AG04449 (cell line): ENCODE measurements at regions of chr2 and their contacts with region 1.

Region 1: GRCh38 chr2:98839292-98839691 is 96.7 kb downstream of the CRACDL start:
- DNase-seq: peak; percentile 26
- H3K4me3 ChIP-seq: no peak overlapping the region
- CTCF ChIP-seq: no peak

Region 2: GRCh38 chr2:98649135-98649991 is 189.9 kb before region 1 on chr2:
- CTCF ChIA-PET with region 1: interaction called, 19 read pairs
- POLR2A ChIA-PET with region 1: no interaction called
- DNase-seq: peak; percentile 21
- H3K4me3 ChIP-seq: no peak overlapping the region
- CTCF ChIP-seq: peak; percentile 93